ENCODE measurements at regions of chr2 and their contacts with region 1.

Region 1: DNA sequence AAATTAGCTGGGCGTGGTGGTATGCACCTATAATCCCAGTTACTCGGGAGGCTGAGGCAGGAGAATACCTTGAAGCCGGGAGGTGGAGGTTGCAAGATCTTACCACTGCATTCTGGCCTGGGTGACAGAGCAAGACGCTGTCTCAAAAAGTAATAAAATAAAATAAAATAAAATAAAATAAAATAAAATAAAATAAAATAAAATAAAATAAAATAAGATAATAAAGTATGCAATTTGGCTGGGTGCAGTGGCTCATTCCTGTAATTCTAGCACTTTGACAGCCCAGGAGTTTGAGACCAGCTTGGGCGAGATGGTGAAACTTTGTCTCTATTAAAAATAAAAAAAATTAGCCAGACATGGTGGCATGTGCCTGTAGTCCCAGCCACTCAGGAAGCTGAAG is 85.6 kb upstream of the XPO1 start:
- DNase-seq: no peak
- H3K4me3 ChIP-seq: no peak overlapping the region
- H3K27ac ChIP-seq: no peak overlapping the region
- H3K4me1 ChIP-seq: no peaks in the 10 kb centered on the region
- H3K27me3 ChIP-seq: no peaks in the 10 kb centered on the region
- CTCF ChIP-seq: no peak
- EP300 ChIP-seq: no peak
- POLR2A ChIP-seq: no peak

Region 2: GRCh38 chr2:61426267-61426897 is 197.4 kb before region 1 on chr2:
- in situ Hi-C with region 1: no loop called
- intact Hi-C with region 1: no loop called
- DNase-seq: peak; percentile 76
- H3K4me3 ChIP-seq: no peak overlapping the region
- H3K27ac ChIP-seq: peak overlapping the region in 1 of 4 donors; percentile 9
- H3K4me1 ChIP-seq: peaks cover 4 to 29% (median 17%) of the 10 kb centered on the region in 4 donors
- H3K27me3 ChIP-seq: no peaks in the 10 kb centered on the region
- CTCF ChIP-seq: peak; percentile 61 to 85 (median 77)
- EP300 ChIP-seq: no peak
- POLR2A ChIP-seq: no peak

Region 3: DNA sequence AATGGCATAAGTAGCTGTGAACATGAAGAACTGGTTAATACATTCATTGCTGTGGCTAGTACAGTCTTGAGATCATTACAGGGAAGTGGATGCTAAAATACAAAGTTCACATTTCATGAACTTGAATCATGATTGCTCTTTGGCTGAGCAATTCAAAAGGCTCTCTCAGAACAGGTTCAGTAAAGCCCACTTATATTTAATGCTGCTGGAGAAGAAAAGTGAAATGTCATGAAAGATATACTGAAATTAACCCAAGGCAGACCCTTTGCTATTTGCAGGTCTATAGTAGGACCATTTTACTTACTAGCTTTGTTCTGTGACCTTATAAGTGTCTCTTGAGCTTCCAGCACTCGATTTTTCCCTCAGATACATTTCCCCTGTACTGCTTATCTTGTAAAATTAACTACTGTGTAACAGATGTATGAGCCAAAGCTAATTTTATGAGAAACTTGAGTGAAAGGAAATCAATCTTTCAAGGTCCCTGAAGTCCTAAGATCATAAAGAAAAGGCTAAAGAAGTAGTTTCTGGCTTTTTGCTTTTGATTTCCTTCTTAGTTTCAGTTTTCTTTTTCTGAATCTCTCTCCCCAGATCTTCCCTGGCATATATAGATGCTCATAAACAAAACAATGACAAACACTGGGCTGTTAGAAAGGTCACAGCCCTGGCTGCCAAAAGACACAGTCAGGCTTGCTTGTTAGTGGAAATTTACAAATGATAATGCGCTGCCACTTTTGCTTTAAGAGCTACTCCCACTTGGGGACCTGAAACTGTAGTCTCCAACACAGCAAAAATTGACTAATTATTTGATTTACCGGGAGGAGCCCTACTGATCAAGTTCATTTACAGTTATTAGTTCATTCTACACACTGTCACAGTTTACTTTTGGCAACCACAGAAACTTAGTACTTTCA is 47.1 kb after region 1 on chr2:
- in situ Hi-C with region 1: no loop called
- intact Hi-C with region 1: loop called (anchors 2 kb)
- DNase-seq: peak; percentile 49
- H3K4me3 ChIP-seq: peak overlapping the region in 3 of 4 donors; percentile 12 to 42 (median 25)
- H3K27ac ChIP-seq: peak overlapping the region; percentile 84 to 93 (median 90)
- H3K4me1 ChIP-seq: peaks cover 4 to 22% (median 16%) of the 10 kb centered on the region in 4 donors
- H3K27me3 ChIP-seq: no peaks in the 10 kb centered on the region
- CTCF ChIP-seq: no peak
- EP300 ChIP-seq: no peak
- POLR2A ChIP-seq: peak; percentile 54